ENCODE measurements at regions of chr20 and their contacts with region 1.

Region 1: GRCh38 chr20:62808211-62808865 is 3.7 kb downstream of the OGFR start:
- DNase-seq: peak; percentile 62
- H3K4me3 Mint-ChIP-seq: no peak overlapping the region
- H3K27ac Mint-ChIP-seq: no peak overlapping the region
- H3K4me1 Mint-ChIP-seq: peaks cover 10% of the 10 kb centered on the region
- H3K27me3 Mint-ChIP-seq: no peaks in the 10 kb centered on the region
- CTCF ChIP-seq: peak; percentile 90

Region 2: GRCh38 chr20:62652051-62652926 is 156.0 kb before region 1 on chr20:
- CTCF ChIA-PET with region 1: interaction called, 12 read pairs
- POLR2A ChIA-PET with region 1: interaction called, 3 read pairs
- intact Hi-C with region 1: no loop called
- DNase-seq: peak; percentile 99
- H3K4me3 Mint-ChIP-seq: peak overlapping the region; percentile 72
- H3K27ac Mint-ChIP-seq: peak overlapping the region; percentile 98
- H3K4me1 Mint-ChIP-seq: peaks cover 11% of the 10 kb centered on the region
- H3K27me3 Mint-ChIP-seq: no peaks in the 10 kb centered on the region
- CTCF ChIP-seq: no peak

Region 3: GRCh38 chr20:62668441-62669027 is 139.8 kb before region 1 on chr20:
- CTCF ChIA-PET with region 1: interaction called, 10 read pairs
- POLR2A ChIA-PET with region 1: no interaction called
- intact Hi-C with region 1: loop called (anchors 5 kb)
- DNase-seq: peak; percentile 73
- H3K4me3 Mint-ChIP-seq: no peak overlapping the region
- H3K27ac Mint-ChIP-seq: no peak overlapping the region
- H3K4me1 Mint-ChIP-seq: peaks cover 7% of the 10 kb centered on the region
- H3K27me3 Mint-ChIP-seq: no peaks in the 10 kb centered on the region
- CTCF ChIP-seq: peak; percentile 67

Region 4: GRCh38 chr20:62688855-62689460 is 119.4 kb before region 1 on chr20:
- CTCF ChIA-PET with region 1: interaction called, 10 read pairs
- POLR2A ChIA-PET with region 1: no interaction called
- intact Hi-C with region 1: no loop called
- DNase-seq: no peak
- H3K4me3 Mint-ChIP-seq: no peak overlapping the region
- H3K27ac Mint-ChIP-seq: no peak overlapping the region
- H3K4me1 Mint-ChIP-seq: peaks cover 5% of the 10 kb centered on the region
- H3K27me3 Mint-ChIP-seq: peaks cover 1% of the 10 kb centered on the region
- CTCF ChIP-seq: no peak

Region 5: GRCh38 chr20:62704301-62704948 is 103.9 kb before region 1 on chr20:
- CTCF ChIA-PET with region 1: interaction called, 10 read pairs
- POLR2A ChIA-PET with region 1: interaction called, 4 read pairs
- intact Hi-C with region 1: no loop called
- DNase-seq: peak; percentile 100
- H3K4me3 Mint-ChIP-seq: peak overlapping the region; percentile 39
- H3K27ac Mint-ChIP-seq: peak overlapping the region; percentile 10
- H3K4me1 Mint-ChIP-seq: peaks cover 37% of the 10 kb centered on the region
- H3K27me3 Mint-ChIP-seq: no peaks in the 10 kb centered on the region
- CTCF ChIP-seq: no peak

Region 6: GRCh38 chr20:62780204-62780603 is 28.1 kb before region 1 on chr20:
- CTCF ChIA-PET with region 1: no interaction called
- POLR2A ChIA-PET with region 1: no interaction called
- intact Hi-C with region 1: no loop called
- DNase-seq: no peak
- H3K4me3 Mint-ChIP-seq: no peak overlapping the region
- H3K27ac Mint-ChIP-seq: no peak overlapping the region
- H3K4me1 Mint-ChIP-seq: peaks cover 13% of the 10 kb centered on the region
- H3K27me3 Mint-ChIP-seq: no peaks in the 10 kb centered on the region
- CTCF ChIP-seq: no peak

Region 7: GRCh38 chr20:62822788-62823651 is 14.7 kb after region 1 on chr20:
- CTCF ChIA-PET with region 1: interaction called, 25 read pairs
- POLR2A ChIA-PET with region 1: no interaction called
- intact Hi-C with region 1: no loop called
- DNase-seq: peak; percentile 66
- H3K4me3 Mint-ChIP-seq: no peak overlapping the region
- H3K27ac Mint-ChIP-seq: no peak overlapping the region
- H3K4me1 Mint-ChIP-seq: peaks cover 7% of the 10 kb centered on the region
- H3K27me3 Mint-ChIP-seq: no peaks in the 10 kb centered on the region
- CTCF ChIP-seq: peak; percentile 49

Measured in MCF 10A (cell line).